A549 (cell line): ENCODE measurements at regions of chr3 and their contacts with region 1.

Region 1: GRCh38 chr3:4712143-4712542 is 219.0 kb downstream of the ITPR1 start:
- DNase-seq: no peak
- ATAC-seq: no peak
- H3K4me3 ChIP-seq: no peak overlapping the region
- H3K27ac ChIP-seq: peak overlapping the region; percentile 12 to 43; a peak in 4 of 6 replicates
- H3K4me1 ChIP-seq: peaks cover 20% of the 10 kb centered on the region
- CTCF ChIP-seq: no peak
- EP300 ChIP-seq: no peak
- POLR2A ChIP-seq: no peak
- RAD21 ChIP-seq: no peak

Region 2: GRCh38 chr3:4447295-4447999 is 264.7 kb before region 1 on chr3:
- CTCF ChIA-PET with region 1: no interaction called
- POLR2A ChIA-PET with region 1: no interaction called
- DNase-seq: no peak
- ATAC-seq: no peak
- H3K4me3 ChIP-seq: no peak overlapping the region
- H3K27ac ChIP-seq: no peak overlapping the region
- H3K4me1 ChIP-seq: no peaks in the 10 kb centered on the region
- CTCF ChIP-seq: no peak
- EP300 ChIP-seq: no peak
- POLR2A ChIP-seq: no peak
- RAD21 ChIP-seq: no peak

Region 3: DNA sequence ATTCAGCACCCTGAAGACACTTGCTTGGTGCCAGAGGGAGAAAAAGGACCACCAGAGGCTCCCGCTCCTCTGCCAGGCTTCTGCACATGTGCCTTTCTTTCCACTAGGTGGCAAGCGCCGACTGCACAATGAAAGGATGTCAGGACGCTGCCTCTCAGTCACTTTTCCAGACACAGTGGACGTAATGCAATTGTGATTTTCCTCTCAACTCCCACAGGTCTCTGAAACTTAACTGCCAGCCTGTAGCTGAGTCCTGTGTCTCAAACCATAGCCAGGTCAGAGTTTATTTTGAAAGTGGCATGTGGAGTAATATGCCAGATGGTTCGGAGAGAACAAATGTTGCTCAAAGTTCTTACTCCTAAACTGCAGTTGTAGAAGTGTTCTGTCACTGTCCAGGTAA is 56.1 kb before region 1 on chr3:
- CTCF ChIA-PET with region 1: interaction called, 13 read pairs
- POLR2A ChIA-PET with region 1: no interaction called
- DNase-seq: peak; percentile 62 to 77
- ATAC-seq: peak; percentile 98 to 100
- H3K4me3 ChIP-seq: no peak overlapping the region
- H3K27ac ChIP-seq: no peak overlapping the region
- H3K4me1 ChIP-seq: no peaks in the 10 kb centered on the region
- CTCF ChIP-seq: peak; percentile 93
- EP300 ChIP-seq: no peak
- POLR2A ChIP-seq: no peak
- RAD21 ChIP-seq: peak; percentile 97 to 98

Region 4: GRCh38 chr3:4690277-4690676 is 21.9 kb before region 1 on chr3:
- CTCF ChIA-PET with region 1: interaction called, 14 read pairs
- POLR2A ChIA-PET with region 1: no interaction called
- DNase-seq: no peak
- ATAC-seq: no peak
- H3K4me3 ChIP-seq: no peak overlapping the region
- H3K27ac ChIP-seq: no peak overlapping the region
- H3K4me1 ChIP-seq: no peaks in the 10 kb centered on the region; the same call in 2 of the 3 replicates
- CTCF ChIP-seq: no peak
- EP300 ChIP-seq: no peak
- POLR2A ChIP-seq: no peak
- RAD21 ChIP-seq: no peak

Region 5: DNA sequence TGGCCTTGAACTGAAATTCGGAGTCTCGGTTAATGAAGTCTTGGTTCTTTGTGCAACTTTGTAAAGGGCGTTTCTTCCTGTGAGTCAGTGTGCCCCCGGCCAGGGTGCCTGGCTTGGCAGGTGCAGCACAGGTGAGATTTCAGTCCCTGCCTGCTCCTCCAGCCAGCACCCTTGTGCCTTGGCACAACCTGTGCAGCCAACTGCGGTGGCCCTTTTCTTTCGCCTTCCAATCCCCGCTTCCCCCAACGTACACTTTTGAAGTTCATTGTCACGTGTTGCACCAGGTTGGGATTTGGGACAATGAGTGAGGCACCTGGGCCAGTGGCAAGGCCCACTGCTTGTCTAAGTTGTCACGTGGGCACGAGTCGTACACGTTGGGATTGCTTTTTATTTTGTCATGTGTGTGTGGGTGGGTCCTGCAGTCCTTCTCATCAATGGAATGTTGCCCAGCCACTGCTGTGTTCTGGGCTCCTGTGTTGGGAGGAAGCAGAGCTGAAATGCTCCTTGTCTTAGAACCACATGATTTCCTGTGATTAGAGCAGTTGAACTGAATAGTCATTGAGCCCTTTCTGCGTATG is 24.2 kb after region 1 on chr3:
- CTCF ChIA-PET with region 1: interaction called, 11 read pairs
- POLR2A ChIA-PET with region 1: no interaction called
- DNase-seq: no peak
- ATAC-seq: no peak
- H3K4me3 ChIP-seq: no peak overlapping the region
- H3K27ac ChIP-seq: no peak overlapping the region
- H3K4me1 ChIP-seq: peaks cover 32% of the 10 kb centered on the region
- CTCF ChIP-seq: no peak
- EP300 ChIP-seq: no peak
- POLR2A ChIP-seq: no peak
- RAD21 ChIP-seq: no peak

Region 6: DNA sequence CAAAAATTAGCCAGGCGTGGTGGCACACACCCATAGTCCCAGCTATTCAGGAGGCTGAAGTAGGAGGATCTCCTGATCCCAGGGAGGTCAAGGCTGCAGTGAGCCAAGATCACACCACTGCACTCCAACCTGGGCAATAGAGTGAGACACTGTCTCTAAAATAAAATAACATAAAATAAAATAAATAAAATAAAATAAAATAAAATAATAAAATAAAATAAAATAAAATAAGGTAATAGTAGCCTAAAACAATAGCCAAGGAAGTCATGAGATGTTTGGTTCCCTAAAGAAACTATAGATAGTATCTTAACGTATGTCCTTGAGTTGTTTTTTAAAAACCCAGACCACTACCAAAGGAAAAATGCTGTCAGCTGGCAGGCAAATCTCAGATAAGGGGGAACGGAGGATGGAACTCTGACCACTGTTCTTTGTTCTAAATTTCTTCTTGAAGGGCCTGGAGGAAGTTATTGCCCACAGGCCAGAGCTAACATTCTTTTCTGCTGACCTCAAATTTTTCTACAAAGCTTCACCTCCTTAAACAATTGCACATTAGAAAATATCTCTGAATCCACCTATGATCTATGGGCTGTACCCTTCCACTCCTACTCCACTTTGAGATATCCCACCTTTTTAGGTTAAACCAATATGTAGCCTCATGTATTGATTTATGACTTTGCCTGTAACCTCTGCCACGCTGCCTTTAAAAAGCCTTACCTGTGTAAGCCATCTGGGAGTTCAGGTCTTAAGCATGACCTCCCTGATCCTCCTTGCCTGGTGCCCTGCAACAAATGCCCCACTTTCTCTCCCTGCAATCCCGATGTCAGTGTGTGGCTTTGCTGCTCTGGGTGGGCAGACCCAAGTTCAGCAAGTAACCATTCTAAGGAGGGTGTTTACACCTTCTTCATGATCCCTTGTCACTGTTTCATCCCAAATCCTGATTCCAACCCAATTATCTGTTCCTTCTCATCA is 140.9 kb after region 1 on chr3:
- CTCF ChIA-PET with region 1: no interaction called
- POLR2A ChIA-PET with region 1: no interaction called
- DNase-seq: no peak
- ATAC-seq: no peak
- H3K4me3 ChIP-seq: no peak overlapping the region
- H3K27ac ChIP-seq: no peak overlapping the region
- H3K4me1 ChIP-seq: no peaks in the 10 kb centered on the region
- CTCF ChIP-seq: no peak
- EP300 ChIP-seq: no peak
- POLR2A ChIP-seq: no peak
- RAD21 ChIP-seq: no peak

Region 7: DNA sequence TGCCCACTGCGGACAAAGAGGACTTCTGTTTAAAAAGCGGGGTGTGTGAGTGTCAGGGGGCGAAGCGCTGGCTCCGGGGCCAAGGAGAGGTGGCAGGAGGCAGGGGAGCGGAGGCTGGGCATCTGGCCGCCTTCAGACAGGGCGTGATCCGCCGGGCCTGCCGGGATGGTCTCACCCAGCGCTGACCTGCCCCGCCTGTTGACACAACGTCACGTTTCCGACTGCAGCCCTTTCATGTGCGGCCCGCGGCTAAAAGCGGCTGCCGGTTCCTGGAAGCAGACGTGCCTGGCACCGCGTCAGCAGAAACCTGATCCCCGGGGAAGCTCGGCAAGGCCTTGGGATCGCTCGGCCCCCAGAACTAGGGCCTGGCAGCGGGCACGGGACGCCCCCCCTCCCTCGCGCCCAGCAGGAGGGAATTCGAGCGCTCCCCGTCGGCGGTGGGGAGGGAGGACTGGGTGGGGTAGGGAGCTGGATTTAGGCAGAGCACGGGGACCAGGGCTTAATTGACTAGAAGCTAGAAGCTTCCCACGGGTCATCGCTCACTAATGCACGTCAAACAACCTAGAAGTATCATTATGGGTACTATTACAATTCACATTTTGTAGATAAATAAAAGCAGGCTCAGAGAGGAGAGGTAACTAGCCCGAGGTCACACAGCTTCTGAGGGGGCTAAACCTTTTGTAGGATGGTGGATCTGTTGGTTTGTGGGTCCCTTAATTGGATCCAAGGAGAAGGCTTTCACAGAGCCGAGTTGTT is 274.8 kb after region 1 on chr3:
- CTCF ChIA-PET with region 1: interaction called, 602 read pairs
- POLR2A ChIA-PET with region 1: interaction called, 10 read pairs
- DNase-seq: peak; percentile 91 to 100
- ATAC-seq: peak; percentile 73 to 83
- H3K4me3 ChIP-seq: 0 out of 3 replicates have a peak overlapping the region, but pooled peaks have one; percentile 16
- H3K27ac ChIP-seq: peak overlapping the region; percentile 96 to 98
- H3K4me1 ChIP-seq: peaks cover 60% of the 10 kb centered on the region
- CTCF ChIP-seq: no peak; the same call in 2 of the 3 replicates
- EP300 ChIP-seq: peak; percentile 99 to 100
- POLR2A ChIP-seq: peak; percentile 18; the same call in 1 of the 2 replicates
- RAD21 ChIP-seq: peak; percentile 37 to 76

Region 8: DNA sequence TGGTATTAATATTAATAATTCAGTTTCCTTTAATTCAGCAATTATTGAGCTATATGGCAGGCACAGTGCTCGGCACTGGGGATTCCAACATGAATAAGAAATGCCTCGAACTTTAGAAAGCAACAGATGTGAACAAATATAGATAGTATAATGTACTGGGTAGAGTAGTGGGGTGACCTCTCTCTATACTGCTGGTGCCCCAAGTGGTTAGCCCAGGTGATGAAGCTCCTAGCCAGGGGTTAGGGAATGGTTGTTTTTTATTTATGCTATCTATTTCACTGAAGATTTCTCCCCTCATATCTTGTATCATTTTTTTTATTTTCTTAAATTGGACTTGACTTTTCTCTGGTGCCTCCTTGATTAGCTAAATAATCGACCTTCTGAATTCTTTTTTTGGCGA is 329.2 kb after region 1 on chr3:
- CTCF ChIA-PET with region 1: interaction called, 21 read pairs
- POLR2A ChIA-PET with region 1: no interaction called
- DNase-seq: no peak
- ATAC-seq: no peak; a peak in 1 of 6 replicates
- H3K4me3 ChIP-seq: no peak overlapping the region
- H3K27ac ChIP-seq: no peak overlapping the region
- H3K4me1 ChIP-seq: no peaks in the 10 kb centered on the region
- CTCF ChIP-seq: no peak
- EP300 ChIP-seq: no peak
- POLR2A ChIP-seq: no peak
- RAD21 ChIP-seq: no peak

Region 9: DNA sequence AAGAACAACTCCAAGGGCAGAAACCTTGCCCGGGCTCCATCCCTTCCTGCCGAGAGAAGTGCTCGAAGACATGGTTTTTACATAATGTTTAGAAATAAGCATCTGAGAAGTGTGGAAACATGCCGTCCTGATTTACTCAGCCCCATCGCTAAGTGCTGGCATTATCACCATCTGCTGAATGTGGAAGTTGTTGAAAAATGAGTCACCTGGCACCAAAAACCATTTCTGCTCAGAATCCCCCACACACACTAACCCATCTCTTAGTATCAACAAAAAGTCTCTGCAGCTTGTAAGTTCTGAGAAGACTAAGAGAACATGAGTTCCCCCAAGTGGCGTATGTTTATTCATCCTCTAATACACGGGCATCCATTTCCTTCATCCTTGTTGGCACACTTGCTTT is 358.9 kb after region 1 on chr3:
- CTCF ChIA-PET with region 1: interaction called, 128 read pairs
- POLR2A ChIA-PET with region 1: no interaction called
- DNase-seq: peak in 1 of 2 experiments; percentile 33
- ATAC-seq: peak in 1 of 2 experiments; percentile 55; a peak in 3 of 6 replicates
- H3K4me3 ChIP-seq: no peak overlapping the region
- H3K27ac ChIP-seq: no peak overlapping the region
- H3K4me1 ChIP-seq: peaks cover 6% of the 10 kb centered on the region; the same call in 2 of the 3 replicates
- CTCF ChIP-seq: no peak
- EP300 ChIP-seq: no peak
- POLR2A ChIP-seq: no peak
- RAD21 ChIP-seq: peak in 1 of 2 experiments; percentile 14; a peak in 1 of 5 replicates